ENCODE measurements at regions of chr19 and their contacts with region 1.

Region 1: GRCh38 chr19:38402967-38403861 is at the start of gene FAM98C:
- DNase-seq: peak; percentile 90 to 97
- H3K4me3 ChIP-seq: peak within 1 kb of the TSS; percentile 94
- H3K27ac ChIP-seq: no peak within 1 kb of the TSS
- H3K4me1 ChIP-seq: peaks cover 8% of the 10 kb centered on the region; the same call in 1 of the 2 replicates
- H3K27me3 ChIP-seq: no peaks in the 10 kb centered on the region
- CTCF ChIP-seq: peak; percentile 94
- total RNA-seq, gene FAM98C: 15.8 and 19.5 TPM in 2 replicates

Region 2: DNA sequence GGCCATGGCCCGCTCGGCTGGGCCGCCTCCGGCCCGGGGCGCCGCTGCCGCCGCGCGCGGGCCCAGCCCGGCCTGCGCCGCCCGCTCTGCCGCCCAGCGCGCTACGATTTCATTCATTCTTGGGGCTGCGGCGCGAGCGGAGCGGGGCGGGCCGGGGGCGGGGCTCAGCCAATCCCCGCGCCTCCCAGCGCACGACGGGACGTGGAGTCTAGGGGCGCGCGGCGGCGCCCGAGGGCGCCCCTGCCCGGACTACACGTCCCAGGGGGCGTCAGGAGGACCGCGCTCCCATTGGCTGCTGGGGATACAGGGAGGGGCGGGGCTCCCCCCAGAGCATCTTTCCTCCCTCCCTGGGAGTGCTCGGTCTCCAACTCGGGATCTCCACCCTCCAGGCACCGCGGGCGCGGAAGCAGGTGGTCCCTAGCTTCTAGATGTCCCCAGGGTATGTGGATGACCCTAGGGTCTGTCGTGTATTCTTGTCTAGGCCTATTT is 173.6 kb before region 1 on chr19:
- CTCF ChIA-PET with region 1: interaction called, 5 read pairs
- POLR2A ChIA-PET with region 1: no interaction called
- intact Hi-C with region 1: loop called (anchors 5 kb)
- DNase-seq: peak in 1 of 2 experiments; percentile 56
- H3K4me3 ChIP-seq: no peak overlapping the region
- H3K27ac ChIP-seq: no peak overlapping the region
- H3K4me1 ChIP-seq: 0 out of 2 replicates have a peak, but pooled peaks cover 6% of the 10 kb centered on the region
- H3K27me3 ChIP-seq: peaks cover 14% of the 10 kb centered on the region; the same call in 1 of the 2 replicates
- CTCF ChIP-seq: no peak

Region 3: DNA sequence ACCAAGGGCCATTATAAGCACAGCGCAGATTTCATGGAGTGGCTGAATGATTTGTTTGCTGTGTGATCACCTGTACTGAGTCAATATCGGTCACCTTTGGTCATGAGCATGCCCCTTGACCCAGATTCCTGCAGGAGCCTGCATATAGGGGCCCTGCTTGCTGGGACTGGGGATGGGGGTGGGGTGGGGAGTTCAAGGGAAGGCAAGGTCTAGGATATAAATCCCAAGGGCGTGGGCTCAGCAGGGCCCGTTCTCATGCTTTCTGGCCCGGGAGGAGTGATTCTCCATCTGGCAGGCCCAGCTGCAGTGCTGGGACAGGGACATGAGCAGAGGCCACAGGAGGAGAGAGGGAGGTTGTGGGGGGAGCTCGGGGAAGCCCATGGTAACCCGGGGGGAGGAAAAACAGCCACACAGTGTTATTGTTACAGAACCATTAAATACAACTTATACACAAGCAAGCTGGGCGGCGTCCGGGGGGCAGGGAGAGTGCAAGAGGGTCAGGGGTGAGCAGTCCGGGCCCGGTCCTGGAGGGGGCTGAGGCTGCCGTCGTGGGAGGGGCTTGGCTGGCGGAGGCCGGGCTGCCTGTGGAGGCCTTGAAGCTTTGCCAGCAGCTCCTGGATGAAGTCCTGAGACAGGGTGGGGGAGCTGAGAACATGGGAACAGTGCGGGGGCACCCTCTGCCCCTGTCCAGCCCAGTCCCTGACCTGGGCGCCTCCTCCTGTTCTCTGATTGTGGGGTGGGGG is 152.2 kb before region 1 on chr19:
- CTCF ChIA-PET with region 1: no interaction called
- POLR2A ChIA-PET with region 1: interaction called, 11 read pairs
- intact Hi-C with region 1: no loop called
- DNase-seq: no peak
- H3K4me3 ChIP-seq: no peak overlapping the region
- H3K27ac ChIP-seq: no peak overlapping the region
- H3K4me1 ChIP-seq: peaks cover 9% of the 10 kb centered on the region
- H3K27me3 ChIP-seq: no peaks in the 10 kb centered on the region
- CTCF ChIP-seq: no peak

Region 4: DNA sequence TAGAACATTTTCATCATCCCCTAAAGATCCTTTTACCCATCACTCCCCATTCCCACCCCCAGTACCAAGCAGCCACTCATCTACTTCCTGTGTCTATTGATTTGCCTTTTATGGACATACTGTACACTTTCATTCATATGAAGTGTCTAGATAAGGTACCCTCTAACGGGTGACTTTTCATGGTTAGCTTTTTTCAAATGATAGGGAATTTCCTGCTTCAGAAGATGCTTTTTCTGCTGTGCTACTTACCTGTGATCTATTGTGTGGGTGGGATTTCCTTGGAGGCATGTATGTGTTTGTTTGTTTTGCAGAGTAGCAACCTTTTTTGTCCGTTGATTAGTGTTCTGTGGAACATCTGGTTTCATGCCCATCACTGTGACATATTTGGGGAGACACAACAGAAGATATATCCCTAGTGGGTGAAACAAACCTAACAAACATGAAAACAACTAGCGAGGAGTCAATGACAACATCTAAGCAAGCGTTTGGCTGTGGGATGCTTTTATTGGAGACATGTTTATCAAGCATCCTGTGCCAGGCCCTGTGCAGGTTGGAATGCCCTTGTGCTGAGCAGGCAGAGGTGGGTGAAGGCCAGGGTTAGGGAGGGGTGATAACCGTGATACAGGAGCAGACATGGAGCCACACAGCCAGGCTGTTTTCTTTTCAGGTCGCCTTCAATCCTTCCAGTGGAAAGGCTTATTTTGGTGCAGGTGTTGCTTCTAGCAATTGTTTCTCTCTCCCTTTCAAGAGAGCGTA is 121.2 kb before region 1 on chr19:
- CTCF ChIA-PET with region 1: no interaction called
- POLR2A ChIA-PET with region 1: no interaction called
- intact Hi-C with region 1: no loop called
- DNase-seq: no peak
- H3K4me3 ChIP-seq: no peak overlapping the region
- H3K27ac ChIP-seq: no peak overlapping the region
- H3K4me1 ChIP-seq: peaks cover 34% of the 10 kb centered on the region
- H3K27me3 ChIP-seq: no peaks in the 10 kb centered on the region
- CTCF ChIP-seq: no peak

Region 5: GRCh38 chr19:38949580-38950367 is 546.6 kb after region 1 on chr19:
- CTCF ChIA-PET with region 1: interaction called, 5 read pairs
- POLR2A ChIA-PET with region 1: no interaction called
- intact Hi-C with region 1: loop called (anchors 1 kb)
- DNase-seq: peak; percentile 64 to 91
- H3K4me3 ChIP-seq: peak overlapping the region; percentile 50; the same call in 1 of the 2 replicates
- H3K27ac ChIP-seq: no peak overlapping the region
- H3K4me1 ChIP-seq: no peaks in the 10 kb centered on the region
- H3K27me3 ChIP-seq: no peaks in the 10 kb centered on the region
- CTCF ChIP-seq: no peak

Region 6: GRCh38 chr19:39212375-39212742 is 809.1 kb after region 1 on chr19:
- CTCF ChIA-PET with region 1: interaction called, 12 read pairs
- POLR2A ChIA-PET with region 1: no interaction called
- intact Hi-C with region 1: no loop called
- DNase-seq: peak in 1 of 2 experiments; percentile 40
- H3K4me3 ChIP-seq: no peak overlapping the region
- H3K27ac ChIP-seq: no peak overlapping the region
- H3K4me1 ChIP-seq: no peaks in the 10 kb centered on the region
- H3K27me3 ChIP-seq: no peaks in the 10 kb centered on the region
- CTCF ChIP-seq: peak; percentile 59